ENCODE measurements at regions of chr5 and their contacts with region 1.

Region 1: DNA sequence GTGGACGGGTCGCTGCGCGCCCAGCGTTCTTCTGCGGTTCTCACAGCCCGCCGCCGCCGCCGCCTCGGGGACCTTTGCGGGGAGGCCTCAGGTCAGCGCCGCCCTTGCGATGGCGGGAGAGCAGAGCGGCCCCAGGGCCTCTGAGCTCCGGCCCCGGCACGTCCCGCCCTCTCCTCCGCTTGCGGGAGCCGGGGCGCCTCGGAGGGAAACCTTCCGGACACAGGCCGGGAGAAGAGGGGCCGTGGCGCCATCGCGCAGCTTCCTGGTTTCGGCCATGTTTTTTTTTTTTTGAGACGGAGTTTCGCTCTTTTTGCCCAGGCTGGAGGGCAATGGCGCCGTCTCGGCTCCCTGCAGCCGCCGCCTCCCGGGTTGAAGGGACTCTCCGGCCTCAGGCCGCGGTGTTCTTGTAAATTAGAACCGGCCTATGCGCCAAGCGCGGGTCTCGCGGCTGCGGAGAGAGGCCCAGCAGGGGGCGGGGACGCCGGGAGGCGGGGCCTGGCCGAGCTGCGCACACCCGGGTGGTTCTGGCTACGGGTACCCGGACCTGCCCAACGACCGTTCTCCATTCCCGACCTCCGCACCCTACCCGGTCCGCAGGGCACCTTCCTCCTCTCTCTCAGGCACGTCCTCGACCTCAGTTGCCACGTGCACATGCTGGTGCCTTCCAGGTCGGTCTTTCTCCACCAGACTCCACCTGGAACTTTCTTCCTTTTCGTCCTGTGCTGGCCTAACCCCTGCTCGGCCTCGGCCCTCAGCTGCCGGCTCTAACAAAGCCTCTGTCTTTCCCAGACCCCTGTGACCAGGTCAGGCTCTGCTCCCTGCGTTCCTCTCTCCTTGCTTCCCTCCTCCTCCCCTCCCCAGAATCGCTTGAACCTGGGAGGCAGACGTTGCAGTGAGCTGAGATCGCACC is 28.8 kb upstream of the MGAT1 start:
- DNase-seq: peak; percentile 82
- ATAC-seq: peak; percentile 83
- H3K4me3 Mint-ChIP-seq: peak overlapping the region; percentile 98
- H3K27ac Mint-ChIP-seq: peak overlapping the region; percentile 98
- H3K4me1 Mint-ChIP-seq: peaks cover 54% of the 10 kb centered on the region
- H3K27me3 Mint-ChIP-seq: no peaks in the 10 kb centered on the region
- CTCF ChIP-seq: no peak

Region 2: DNA sequence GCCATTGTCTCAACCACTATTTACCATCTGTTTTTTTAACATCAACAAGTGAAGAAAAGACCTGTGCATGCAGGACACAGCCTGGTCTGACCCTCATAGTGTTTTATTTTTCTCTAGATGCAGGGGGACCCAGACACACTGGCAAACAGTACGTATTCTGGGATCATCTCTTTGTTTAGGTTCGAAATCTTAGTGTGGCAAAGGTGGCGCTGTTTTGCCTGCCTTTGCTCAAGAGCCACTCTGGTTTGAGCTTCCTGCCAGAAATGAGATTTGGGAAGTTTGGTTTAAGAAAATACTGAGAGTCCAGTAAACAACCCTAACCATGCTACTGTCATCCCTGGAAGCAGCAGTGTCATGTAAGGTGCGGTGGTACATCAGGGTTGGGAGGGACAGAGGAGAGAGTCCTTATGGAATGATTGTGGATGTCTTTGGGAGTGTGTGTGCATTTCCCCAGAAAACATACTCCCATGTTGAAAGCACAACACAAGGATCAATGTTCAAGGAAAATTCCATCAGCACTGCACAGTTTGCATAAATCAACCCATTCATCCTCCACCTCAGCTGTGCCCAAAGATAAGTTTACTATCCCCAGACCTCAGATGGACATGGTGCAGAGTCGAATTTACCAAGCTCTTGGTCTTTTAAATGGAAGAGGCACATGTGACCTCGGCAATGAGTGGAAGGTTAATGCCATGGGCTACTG is 148.0 kb before region 1 on chr5:
- CTCF ChIA-PET with region 1: no interaction called
- POLR2A ChIA-PET with region 1: no interaction called
- intact Hi-C with region 1: no loop called
- DNase-seq: no peak
- ATAC-seq: no peak
- H3K4me3 Mint-ChIP-seq: no peak overlapping the region
- H3K27ac Mint-ChIP-seq: no peak overlapping the region
- H3K4me1 Mint-ChIP-seq: no peaks in the 10 kb centered on the region
- H3K27me3 Mint-ChIP-seq: peaks cover 26% of the 10 kb centered on the region
- CTCF ChIP-seq: no peak

Region 3: GRCh38 chr5:180784497-180785097 is 46.8 kb before region 1 on chr5:
- CTCF ChIA-PET with region 1: interaction called, 5 read pairs
- POLR2A ChIA-PET with region 1: interaction called, 7 read pairs
- intact Hi-C with region 1: loop called (anchors 1 kb)
- DNase-seq: peak; percentile 58
- ATAC-seq: peak; percentile 89
- H3K4me3 Mint-ChIP-seq: no peak overlapping the region
- H3K27ac Mint-ChIP-seq: no peak overlapping the region
- H3K4me1 Mint-ChIP-seq: no peaks in the 10 kb centered on the region
- H3K27me3 Mint-ChIP-seq: no peaks in the 10 kb centered on the region
- CTCF ChIP-seq: peak; percentile 36

Region 4: DNA sequence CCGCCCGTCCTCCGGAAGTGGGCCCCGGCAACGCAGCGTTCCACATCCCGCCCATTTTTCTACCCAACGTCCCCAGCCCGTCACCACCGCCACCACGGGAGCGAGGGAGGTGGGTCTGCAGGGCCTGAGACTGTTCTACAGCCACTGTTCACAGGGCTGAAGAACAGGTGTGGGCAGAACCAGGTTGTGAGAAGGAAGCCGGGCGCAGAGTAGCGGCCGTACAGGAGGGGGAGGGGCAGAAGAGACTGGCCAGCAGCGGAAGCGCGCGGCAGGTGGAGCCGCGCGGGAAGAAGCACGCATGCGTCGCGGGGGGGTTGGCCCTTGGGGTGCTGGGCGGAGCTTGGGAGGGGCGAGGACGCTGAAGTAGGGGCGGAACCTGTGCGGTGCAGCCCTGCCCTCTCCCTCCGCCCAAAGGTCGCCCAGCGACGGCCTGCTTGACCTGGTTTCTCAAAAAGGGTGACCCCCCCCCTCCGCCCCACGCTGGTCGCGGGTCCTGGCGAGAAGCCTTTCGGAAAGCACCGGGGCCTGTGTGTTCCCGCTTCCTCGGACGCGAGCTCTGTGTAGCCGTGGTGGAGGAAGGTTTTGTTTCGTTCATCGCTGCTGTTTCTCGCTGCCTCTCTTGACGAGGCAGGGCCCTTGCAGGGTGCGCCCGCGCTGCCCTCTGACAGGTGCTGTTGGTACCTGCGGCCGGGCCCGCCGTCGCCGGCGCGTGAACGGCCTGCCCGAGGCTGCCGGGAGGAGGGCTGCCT is 21.0 kb before region 1 on chr5:
- CTCF ChIA-PET with region 1: interaction called, 6 read pairs
- POLR2A ChIA-PET with region 1: interaction called, 240 read pairs
- intact Hi-C with region 1: loop called (anchors 1 kb)
- DNase-seq: peak; percentile 98
- ATAC-seq: peak; percentile 84
- H3K4me3 Mint-ChIP-seq: peak overlapping the region; percentile 98
- H3K27ac Mint-ChIP-seq: peak overlapping the region; percentile 100
- H3K4me1 Mint-ChIP-seq: peaks cover 76% of the 10 kb centered on the region
- H3K27me3 Mint-ChIP-seq: no peaks in the 10 kb centered on the region
- CTCF ChIP-seq: no peak

Region 5: GRCh38 chr5:180848878-180849277 is 17.5 kb after region 1 on chr5:
- CTCF ChIA-PET with region 1: no interaction called
- POLR2A ChIA-PET with region 1: interaction called, 11 read pairs
- intact Hi-C with region 1: no loop called
- DNase-seq: no peak
- ATAC-seq: no peak
- H3K4me3 Mint-ChIP-seq: no peak overlapping the region
- H3K27ac Mint-ChIP-seq: no peak overlapping the region
- H3K4me1 Mint-ChIP-seq: no peaks in the 10 kb centered on the region
- H3K27me3 Mint-ChIP-seq: no peaks in the 10 kb centered on the region
- CTCF ChIP-seq: no peak

Region 6: DNA sequence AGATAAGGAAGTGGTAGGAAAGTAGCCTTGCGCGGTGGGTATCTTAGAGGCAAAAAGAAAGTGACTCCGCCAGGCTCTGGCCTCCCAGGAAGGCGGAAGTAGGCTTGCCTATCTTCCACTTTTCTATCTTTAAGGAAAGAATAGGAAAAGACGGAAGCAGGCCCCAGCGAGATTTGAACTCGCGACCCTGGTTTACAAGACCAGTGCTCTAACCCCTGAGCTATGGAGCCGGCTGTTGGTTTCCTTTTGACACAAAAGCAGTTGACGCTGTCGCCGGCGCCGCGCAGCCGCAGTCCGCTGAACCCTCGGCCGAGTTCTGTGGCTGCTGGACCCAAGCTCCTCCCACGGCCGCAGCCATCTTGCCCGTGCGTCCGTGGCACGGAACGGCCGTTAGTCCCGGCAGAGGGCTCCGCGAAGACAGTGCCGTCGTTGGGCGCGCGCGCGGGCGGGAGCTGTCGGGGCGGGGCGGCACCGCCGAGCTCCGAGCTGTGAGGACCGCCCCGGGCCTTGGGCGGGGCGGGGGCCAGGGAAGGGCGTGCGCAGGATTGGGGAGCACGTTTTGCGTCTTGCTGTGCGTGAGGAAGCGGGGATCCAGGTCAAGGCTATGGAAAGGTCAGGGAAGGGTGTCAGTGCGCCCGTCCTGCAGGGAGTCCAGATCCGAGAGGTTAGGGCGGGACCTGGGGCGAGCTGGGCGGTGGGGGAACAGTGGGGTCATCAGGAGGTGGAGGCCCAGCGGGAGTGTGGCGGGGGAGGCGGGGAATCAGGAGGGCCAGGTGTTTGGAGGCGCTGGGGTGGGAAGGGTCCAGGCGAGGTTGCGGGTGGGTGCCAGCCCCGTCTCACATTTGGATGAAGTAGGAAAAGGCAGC is 360.4 kb after region 1 on chr5:
- CTCF ChIA-PET with region 1: interaction called, 3 read pairs
- POLR2A ChIA-PET with region 1: interaction called, 17 read pairs
- intact Hi-C with region 1: no loop called
- DNase-seq: peak; percentile 99
- ATAC-seq: peak; percentile 63
- H3K4me3 Mint-ChIP-seq: peak overlapping the region; percentile 88
- H3K27ac Mint-ChIP-seq: peak overlapping the region; percentile 96
- H3K4me1 Mint-ChIP-seq: peaks cover 34% of the 10 kb centered on the region
- H3K27me3 Mint-ChIP-seq: peaks cover 11% of the 10 kb centered on the region
- CTCF ChIP-seq: no peak

Measured in activated B cell treated with CpG ODN at 0.5 μM for 24 hours (primary cell).